ENCODE measurements at regions of chr5 and their contacts with region 1.

Region 1: DNA sequence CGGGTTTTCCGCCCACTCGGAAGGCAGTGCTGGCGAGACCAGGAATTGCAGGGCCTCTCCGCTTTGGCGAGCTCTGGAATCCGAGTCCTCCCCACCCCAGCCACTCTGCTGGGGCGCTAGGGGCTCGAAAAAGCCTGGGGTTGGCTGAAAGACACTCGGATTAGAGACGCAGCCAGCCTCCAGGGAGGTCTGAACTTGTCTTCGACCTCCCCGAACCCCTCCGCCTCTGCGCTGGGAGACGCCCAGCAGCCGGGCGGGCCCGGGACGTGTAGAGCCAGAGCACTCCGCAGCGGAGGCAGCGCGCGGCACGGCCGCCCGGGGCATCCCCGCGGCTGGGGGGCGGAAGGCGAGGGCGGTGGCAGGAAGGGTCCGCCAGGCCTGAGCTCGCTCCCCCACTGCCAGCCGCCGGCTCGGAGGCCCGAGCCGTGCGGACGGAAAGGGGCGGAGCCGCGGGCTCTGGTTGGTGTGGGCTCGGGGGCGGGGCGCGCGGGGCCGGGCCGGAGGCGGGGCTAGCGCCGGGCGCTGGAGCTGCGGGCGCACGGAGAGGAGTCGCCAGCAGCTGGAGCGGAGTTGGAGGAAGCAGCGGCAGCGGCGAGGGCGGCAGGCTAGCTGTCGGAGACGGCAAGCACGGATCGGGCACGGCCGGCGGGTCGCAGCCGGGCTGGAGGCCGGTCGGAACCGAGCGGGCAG is at the start of gene PIK3R1:
- DNase-seq: peak; percentile 95 to 97
- H3K4me3 ChIP-seq: peak within 1 kb of the TSS; percentile 93 to 98
- H3K27ac ChIP-seq: peak within 1 kb of the TSS; percentile 97 to 98
- H3K4me1 ChIP-seq: no peaks in the 10 kb centered on the region
- H3K27me3 ChIP-seq: no peaks in the 10 kb centered on the region
- CTCF ChIP-seq: peak; percentile 21 to 63 (median 32)
- POLR2A ChIP-seq: peak; percentile 99
- total RNA-seq, gene PIK3R1: 101 to 358 (median 190) TPM

Region 2: GRCh38 chr5:67935908-67936566 is 279.3 kb before region 1 on chr5:
- intact Hi-C with region 1: no loop called
- DNase-seq: no peak
- H3K4me3 ChIP-seq: no peak overlapping the region
- H3K27ac ChIP-seq: no peak overlapping the region
- H3K4me1 ChIP-seq: no peaks in the 10 kb centered on the region
- H3K27me3 ChIP-seq: no peaks in the 10 kb centered on the region
- CTCF ChIP-seq: no peak
- POLR2A ChIP-seq: no peak

Region 3: DNA sequence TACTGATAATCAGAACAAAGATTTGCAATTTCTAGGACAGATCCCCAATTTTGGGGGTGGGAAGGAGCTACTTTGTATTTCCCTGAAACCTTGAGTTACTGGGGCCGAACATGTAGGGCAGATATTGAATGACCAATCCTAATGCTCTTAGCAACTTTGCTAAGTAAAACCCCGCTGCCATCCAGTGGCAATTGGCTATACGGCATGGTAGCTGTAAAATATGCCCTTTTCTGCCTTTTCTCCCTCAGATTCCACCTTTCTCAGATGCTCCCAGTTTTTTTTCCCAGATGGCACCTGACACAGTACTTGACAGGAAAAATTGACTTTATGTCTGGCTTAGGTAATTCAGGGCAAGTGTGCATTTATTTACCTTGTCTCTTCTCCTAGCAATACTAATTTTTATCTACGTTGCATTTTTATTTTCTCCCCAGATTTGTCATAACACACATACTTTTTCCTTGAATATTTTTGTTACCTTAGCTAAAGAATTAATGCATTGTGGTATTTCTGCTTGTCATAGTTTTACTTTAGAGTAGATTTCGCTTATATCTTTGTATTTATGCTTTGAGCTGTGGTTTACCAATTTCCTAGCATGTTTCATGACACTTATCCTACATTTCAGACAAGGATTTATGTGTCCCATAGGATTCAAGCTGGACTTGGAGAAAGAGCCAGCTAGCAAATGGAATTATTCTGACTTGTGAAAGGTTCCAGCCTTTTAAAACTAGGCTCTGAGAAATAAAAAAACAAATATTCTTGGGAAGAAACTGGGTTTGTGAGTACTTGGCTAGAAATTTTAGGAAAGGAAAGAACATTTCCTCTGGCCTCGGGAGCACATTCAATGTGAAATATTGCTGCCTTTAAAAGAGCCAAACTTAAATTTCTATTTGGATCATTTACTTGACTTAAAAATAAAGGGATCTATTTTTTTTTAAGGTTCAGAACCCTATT is 37.6 kb after region 1 on chr5:
- intact Hi-C with region 1: loop called (anchors 5 kb)
- DNase-seq: peak in 1 of 2 donors; percentile 73
- H3K4me3 ChIP-seq: peak overlapping the region; percentile 8 to 10
- H3K27ac ChIP-seq: peak overlapping the region; percentile 79 to 82
- H3K4me1 ChIP-seq: peaks cover 12 to 44% of the 10 kb centered on the region in 2 donors
- H3K27me3 ChIP-seq: no peaks in the 10 kb centered on the region
- CTCF ChIP-seq: peak; percentile 63 to 73 (median 70)
- POLR2A ChIP-seq: no peak

Region 4: DNA sequence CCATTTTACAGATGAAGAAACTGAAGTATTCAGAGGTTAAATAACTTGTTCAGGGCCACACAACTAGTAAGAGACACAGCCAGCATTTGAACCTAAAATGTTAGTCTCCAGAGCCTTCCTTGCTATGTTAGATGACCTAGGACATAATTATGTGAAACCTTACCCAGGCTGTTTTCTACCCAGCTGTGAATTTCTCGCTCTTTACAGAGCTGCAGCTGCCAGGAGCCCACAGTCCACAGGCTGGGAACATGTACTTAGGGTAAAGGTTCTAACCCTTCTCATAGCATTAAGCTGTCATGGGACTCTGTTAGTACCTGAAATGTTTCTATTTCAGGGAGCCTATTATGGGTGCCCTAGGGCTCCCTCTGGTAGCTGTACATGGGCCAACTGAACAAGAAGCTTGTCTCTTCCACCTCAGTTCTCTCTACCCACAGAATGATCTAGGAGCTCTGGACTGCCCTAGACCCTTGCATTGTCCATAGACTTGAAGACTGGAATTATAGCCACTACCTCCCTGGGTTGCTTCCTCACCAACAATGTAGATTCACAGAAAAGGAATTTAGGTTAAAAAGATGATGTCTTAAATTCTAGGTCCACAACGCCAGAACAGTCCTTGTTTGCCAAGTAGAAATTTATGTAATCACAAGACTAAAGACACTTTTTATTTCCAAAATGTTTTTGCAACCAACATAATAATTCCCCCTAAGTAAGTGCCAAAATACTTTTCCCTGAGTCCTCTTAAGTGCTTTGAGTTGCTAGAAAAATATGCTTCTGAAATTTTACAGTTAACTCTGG is 263.1 kb after region 1 on chr5:
- intact Hi-C with region 1: no loop called
- DNase-seq: no peak
- H3K4me3 ChIP-seq: no peak overlapping the region
- H3K27ac ChIP-seq: peak overlapping the region; percentile 86 to 88
- H3K4me1 ChIP-seq: peaks cover 0 to 17% of the 10 kb centered on the region in 2 donors
- H3K27me3 ChIP-seq: no peaks in the 10 kb centered on the region
- CTCF ChIP-seq: no peak
- POLR2A ChIP-seq: no peak